ENCODE measurements at regions of chr14 and their contacts with region 1.

Region 1: GRCh38 chr14:68816262-68816942 is 23.5 kb upstream of the ZFP36L1 start:
- DNase-seq: peak; percentile 97
- H3K4me3 Mint-ChIP-seq: peak overlapping the region; percentile 79
- H3K27ac Mint-ChIP-seq: peak overlapping the region; percentile 90
- H3K4me1 Mint-ChIP-seq: peaks cover 56% of the 10 kb centered on the region
- H3K27me3 Mint-ChIP-seq: no peaks in the 10 kb centered on the region

Region 2: GRCh38 chr14:67919259-67920032 is 897.0 kb before region 1 on chr14:
- intact Hi-C with region 1: no loop called
- DNase-seq: no peak
- H3K4me3 Mint-ChIP-seq: no peak overlapping the region
- H3K27ac Mint-ChIP-seq: no peak overlapping the region
- H3K4me1 Mint-ChIP-seq: no peaks in the 10 kb centered on the region
- H3K27me3 Mint-ChIP-seq: no peaks in the 10 kb centered on the region

Region 3: GRCh38 chr14:67934008-67934481 is 882.4 kb before region 1 on chr14:
- intact Hi-C with region 1: loop called (anchors 2 kb)
- DNase-seq: peak; percentile 68
- H3K4me3 Mint-ChIP-seq: no peak overlapping the region
- H3K27ac Mint-ChIP-seq: no peak overlapping the region
- H3K4me1 Mint-ChIP-seq: peaks cover 2% of the 10 kb centered on the region
- H3K27me3 Mint-ChIP-seq: no peaks in the 10 kb centered on the region

Region 4: GRCh38 chr14:67943947-67944346 is 872.5 kb before region 1 on chr14:
- intact Hi-C with region 1: loop called (anchors 2 kb)
- DNase-seq: peak; percentile 84
- H3K4me3 Mint-ChIP-seq: no peak overlapping the region
- H3K27ac Mint-ChIP-seq: no peak overlapping the region
- H3K4me1 Mint-ChIP-seq: no peaks in the 10 kb centered on the region
- H3K27me3 Mint-ChIP-seq: peaks cover 4% of the 10 kb centered on the region